ENCODE measurements at regions of chr20 and their contacts with region 1.

Region 1: DNA sequence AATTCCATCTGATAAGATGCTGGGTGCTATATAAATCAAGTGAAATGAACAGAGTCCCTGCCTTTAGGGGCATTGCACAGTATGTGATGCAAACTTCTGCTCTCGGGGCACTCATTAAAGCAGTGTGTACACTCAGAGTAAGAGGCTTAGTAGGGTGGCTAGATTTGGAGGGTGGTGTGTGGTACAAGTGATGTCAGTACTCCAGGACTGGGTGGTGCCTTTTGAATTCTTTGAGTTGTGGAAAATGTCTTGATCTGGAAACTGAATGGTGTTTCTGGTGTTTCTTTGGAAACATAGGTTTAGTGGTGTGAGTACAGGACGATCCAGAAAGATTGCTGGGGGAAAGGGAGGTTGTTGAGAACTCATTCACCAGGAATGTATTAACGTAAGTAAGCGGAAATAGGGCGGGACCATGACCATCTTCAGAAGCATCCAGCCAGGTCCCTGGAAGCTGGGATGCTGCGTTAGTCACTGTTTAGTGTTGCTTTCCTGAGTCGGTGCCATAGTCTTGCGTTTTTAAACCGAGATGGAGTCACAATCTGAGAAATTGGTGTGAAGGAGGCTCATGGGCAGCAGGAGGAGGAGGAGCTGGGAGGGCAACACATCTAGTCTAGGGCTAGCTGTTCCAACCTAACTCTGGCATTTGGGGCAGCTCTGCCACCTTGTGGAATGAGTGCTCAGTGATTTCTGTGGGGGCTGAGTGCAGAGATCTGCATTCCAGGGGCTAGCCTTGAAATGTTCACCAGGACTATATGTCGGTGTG is 70.3 kb downstream of the SCAND1 start:
- DNase-seq: peak; percentile 86 to 99
- H3K4me3 ChIP-seq: peak overlapping the region; percentile 34; the same call in 1 of the 2 replicates
- H3K27ac ChIP-seq: peak overlapping the region; percentile 94
- H3K4me1 ChIP-seq: peaks cover 50% of the 10 kb centered on the region
- H3K27me3 ChIP-seq: no peaks in the 10 kb centered on the region
- CTCF ChIP-seq: peak; percentile 82

Region 2: DNA sequence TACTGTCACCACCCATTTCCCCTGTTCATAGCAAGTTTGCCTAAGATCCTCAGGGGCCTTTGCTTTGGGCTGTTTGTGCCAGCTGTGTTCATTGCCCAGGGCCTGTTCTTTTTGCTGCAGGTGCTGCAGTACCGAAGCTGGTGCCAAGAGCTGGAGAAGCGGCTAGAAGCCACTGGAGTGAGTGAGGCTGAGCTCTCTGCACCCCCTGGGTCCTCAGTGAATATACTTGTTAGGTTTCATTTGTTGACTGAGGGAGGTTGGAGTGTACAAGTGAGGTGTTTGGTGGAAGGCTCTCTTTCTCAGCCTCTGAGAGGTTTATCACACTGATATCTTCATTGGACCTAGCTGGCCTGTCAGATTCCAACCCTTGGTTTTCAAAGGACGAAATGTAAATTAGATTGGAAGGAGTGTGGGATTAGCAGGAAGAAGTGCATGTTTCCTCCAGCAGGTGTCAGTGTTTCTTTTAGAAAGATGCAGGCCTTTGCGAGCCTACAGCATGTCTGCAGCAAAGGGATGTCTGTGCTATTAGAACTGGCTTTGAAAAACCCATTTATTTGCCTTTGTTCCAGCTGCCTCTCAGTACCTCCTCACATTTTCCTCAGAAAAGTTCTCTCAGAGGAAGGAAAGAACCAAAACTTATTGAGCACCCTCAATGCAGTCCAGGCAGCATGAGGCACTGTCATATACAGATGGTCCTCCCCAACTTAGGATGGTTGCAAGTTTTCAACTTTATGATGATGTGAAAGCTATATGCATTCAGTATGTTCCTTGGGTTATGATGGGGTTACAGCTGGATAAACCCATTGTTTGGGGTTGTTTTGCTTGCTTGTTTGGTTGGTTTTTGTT is 420.3 kb before region 1 on chr20:
- CTCF ChIA-PET with region 1: interaction called, 3 read pairs
- POLR2A ChIA-PET with region 1: no interaction called
- intact Hi-C with region 1: loop called (anchors 5 kb)
- DNase-seq: peak; percentile 56 to 60
- H3K4me3 ChIP-seq: no peak overlapping the region
- H3K27ac ChIP-seq: no peak overlapping the region
- H3K4me1 ChIP-seq: peaks cover 26% of the 10 kb centered on the region
- H3K27me3 ChIP-seq: no peaks in the 10 kb centered on the region
- CTCF ChIP-seq: peak; percentile 83

Region 3: GRCh38 chr20:35511814-35512420 is 372.0 kb before region 1 on chr20:
- CTCF ChIA-PET with region 1: no interaction called
- POLR2A ChIA-PET with region 1: no interaction called
- intact Hi-C with region 1: loop called (anchors 1 kb)
- DNase-seq: peak in 1 of 2 experiments; percentile 56
- H3K4me3 ChIP-seq: no peak overlapping the region
- H3K27ac ChIP-seq: no peak overlapping the region
- H3K4me1 ChIP-seq: peaks cover 28% of the 10 kb centered on the region
- H3K27me3 ChIP-seq: no peaks in the 10 kb centered on the region
- CTCF ChIP-seq: peak; percentile 86

Region 4: GRCh38 chr20:35710039-35710438 is 173.9 kb before region 1 on chr20:
- CTCF ChIA-PET with region 1: interaction called, 30 read pairs
- POLR2A ChIA-PET with region 1: no interaction called
- intact Hi-C with region 1: no loop called
- DNase-seq: no peak
- H3K4me3 ChIP-seq: no peak overlapping the region
- H3K27ac ChIP-seq: no peak overlapping the region
- H3K4me1 ChIP-seq: no peaks in the 10 kb centered on the region
- H3K27me3 ChIP-seq: no peaks in the 10 kb centered on the region
- CTCF ChIP-seq: no peak

Region 5: DNA sequence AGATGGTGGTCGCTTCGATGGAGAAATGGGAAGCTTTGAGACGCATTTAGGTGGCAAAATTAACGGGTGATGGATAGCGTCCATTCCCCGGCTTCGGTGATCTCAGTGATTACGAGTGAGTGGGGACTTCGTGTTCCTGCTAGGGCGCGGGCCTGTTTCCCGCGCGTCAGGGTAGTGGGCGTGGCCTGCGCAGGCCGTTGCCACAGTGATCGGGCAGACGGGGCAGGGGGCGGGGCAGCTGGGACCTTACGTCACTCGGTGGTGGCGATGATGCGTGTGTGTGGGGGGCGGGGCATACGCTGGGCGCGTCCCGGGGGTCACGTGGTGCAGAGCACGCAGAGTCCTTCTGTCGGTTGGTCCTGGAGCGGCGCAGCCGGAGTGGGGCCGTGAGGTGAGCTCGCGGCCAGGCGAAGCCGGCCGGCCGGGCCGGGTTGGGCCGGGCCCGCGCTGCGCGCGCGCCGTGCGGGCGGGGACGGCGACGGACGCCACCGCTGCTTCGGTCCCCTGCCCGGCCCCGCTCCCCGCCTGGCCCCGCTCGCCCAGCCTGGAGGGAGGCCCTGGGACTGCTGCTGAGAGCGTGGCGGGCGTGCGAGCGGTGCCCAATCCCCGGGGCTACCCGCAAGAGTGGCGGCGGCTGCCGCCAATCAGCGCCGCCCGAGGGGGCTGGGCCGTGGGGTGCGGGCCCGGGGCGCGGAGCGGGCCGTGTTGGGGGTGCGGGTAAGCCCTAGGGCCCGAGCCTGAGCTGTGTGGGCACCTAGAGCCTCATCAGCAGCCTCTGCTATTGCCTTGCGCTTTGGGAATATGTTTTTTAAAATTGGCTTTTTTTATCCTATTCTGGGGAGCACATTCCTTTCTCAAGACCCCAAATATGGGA is 112.0 kb before region 1 on chr20 and contains the start of gene PHF20:
- CTCF ChIA-PET with region 1: no interaction called
- POLR2A ChIA-PET with region 1: no interaction called
- intact Hi-C with region 1: loop called (anchors 10 kb)
- DNase-seq: peak; percentile 77 to 98
- H3K4me3 ChIP-seq: peak within 1 kb of the TSS; percentile 87
- H3K27ac ChIP-seq: no peak within 1 kb of the TSS
- H3K4me1 ChIP-seq: peaks cover 24% of the 10 kb centered on the region
- H3K27me3 ChIP-seq: no peaks in the 10 kb centered on the region
- CTCF ChIP-seq: no peak
- total RNA-seq, gene PHF20: 59.8 and 60.2 TPM in 2 replicates

Region 6: DNA sequence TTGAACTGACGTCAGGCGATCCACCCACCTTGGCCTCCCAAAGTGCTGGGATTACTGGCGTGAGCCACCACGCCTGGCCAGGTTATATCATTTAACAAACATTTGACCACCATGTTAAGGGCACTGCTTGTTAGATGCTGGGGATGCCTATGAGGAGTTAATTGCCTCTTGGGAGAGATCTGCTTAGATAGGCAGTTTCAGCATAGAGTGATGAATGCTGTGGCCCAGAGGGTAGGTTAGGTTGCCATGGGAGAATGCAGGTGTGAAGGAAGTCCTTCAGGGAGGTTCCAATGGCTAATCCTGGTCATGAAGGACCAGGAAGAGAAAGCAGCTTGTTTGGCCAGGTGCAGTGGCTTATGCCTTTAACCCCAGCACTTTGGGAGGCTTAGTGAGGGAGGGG is 95.2 kb before region 1 on chr20:
- CTCF ChIA-PET with region 1: no interaction called
- POLR2A ChIA-PET with region 1: no interaction called
- intact Hi-C with region 1: no loop called
- DNase-seq: peak in 1 of 2 experiments; percentile 45
- H3K4me3 ChIP-seq: no peak overlapping the region
- H3K27ac ChIP-seq: no peak overlapping the region
- H3K4me1 ChIP-seq: no peaks in the 10 kb centered on the region; the same call in 1 of the 2 replicates
- H3K27me3 ChIP-seq: no peaks in the 10 kb centered on the region
- CTCF ChIP-seq: no peak

Region 7: DNA sequence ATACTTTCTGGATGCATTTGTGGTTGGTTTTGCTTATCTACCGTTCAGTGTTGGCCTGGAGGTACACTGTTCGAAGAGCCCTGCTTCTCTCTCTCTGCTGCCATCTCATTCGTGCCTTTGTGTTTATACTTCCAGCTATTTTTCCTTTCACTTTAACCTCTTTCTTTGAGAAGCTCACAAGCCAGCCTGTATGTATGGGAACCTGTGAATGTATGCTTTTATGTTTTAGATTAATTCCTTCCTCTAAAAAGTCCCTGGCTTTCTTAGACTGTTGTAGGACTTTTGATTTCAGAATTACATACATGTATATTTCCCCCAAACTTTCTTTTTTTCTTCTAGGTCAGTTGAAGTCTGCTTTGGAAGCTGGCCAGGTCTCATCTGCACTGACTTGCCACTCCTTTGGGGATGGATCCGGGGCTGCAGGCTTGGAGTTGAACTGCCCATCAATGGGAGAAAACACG is 12.6 kb before region 1 on chr20:
- CTCF ChIA-PET with region 1: interaction called, 4 read pairs
- POLR2A ChIA-PET with region 1: no interaction called
- intact Hi-C with region 1: loop called (anchors 1 kb)
- DNase-seq: peak in 1 of 2 experiments; percentile 21
- H3K4me3 ChIP-seq: no peak overlapping the region
- H3K27ac ChIP-seq: no peak overlapping the region
- H3K4me1 ChIP-seq: peaks cover 18% of the 10 kb centered on the region
- H3K27me3 ChIP-seq: no peaks in the 10 kb centered on the region
- CTCF ChIP-seq: no peak

Region 8: GRCh38 chr20:36153736-36154699 is 270.1 kb after region 1 on chr20:
- CTCF ChIA-PET with region 1: no interaction called
- POLR2A ChIA-PET with region 1: no interaction called
- intact Hi-C with region 1: no loop called
- DNase-seq: peak; percentile 72 to 89
- H3K4me3 ChIP-seq: peak overlapping the region; percentile 79
- H3K27ac ChIP-seq: peak overlapping the region; percentile 45
- H3K4me1 ChIP-seq: peaks cover 40% of the 10 kb centered on the region
- H3K27me3 ChIP-seq: no peaks in the 10 kb centered on the region
- CTCF ChIP-seq: no peak

Measured in PC-9 (cell line).